ENCODE measurements at regions of chr18 and their contacts with region 1.

Region 1: DNA sequence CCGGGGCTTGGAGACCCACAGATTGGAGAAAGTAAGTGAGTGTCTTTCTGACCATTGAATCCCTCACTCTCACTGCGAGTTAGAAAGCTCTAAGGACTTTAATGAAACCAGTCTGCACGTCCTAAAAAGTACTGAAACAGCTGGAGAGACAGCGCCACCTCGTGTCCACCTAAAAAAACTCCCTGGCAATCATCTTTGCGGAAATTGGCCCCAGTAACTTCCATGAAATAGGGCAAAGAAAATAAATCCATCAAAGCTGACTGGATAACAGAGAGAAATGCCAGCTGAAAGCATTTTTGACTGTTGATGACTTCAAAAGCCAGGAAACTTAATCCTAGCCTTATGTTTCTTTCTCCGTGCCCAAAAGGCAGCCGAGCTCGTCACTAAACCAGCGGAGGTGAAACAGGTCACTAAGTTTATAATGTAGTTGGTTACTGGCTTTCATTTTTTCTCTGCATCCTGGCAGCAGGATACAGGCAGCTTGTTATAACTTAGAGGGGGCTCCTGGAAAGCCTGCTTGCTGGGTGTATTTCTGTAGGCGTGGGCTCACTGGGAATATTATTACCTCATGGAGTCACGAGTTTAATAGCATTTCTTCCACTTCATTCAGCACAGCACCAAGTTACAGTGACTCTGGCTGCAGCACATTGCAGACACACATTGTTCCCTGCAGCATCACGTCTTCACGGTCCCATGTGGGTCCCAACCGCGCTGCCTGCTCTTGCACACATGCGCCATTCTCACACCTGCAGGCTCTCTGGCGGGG is 266.5 kb downstream of the HRH4 start:
- DNase-seq: peak; percentile 77 to 89 (median 82)
- H3K4me3 ChIP-seq: no peak overlapping the region
- H3K27ac ChIP-seq: no peak overlapping the region
- H3K4me1 ChIP-seq: peaks cover 0 to 2% (median 0%) of the 10 kb centered on the region in 4 experiments
- H3K27me3 ChIP-seq: peaks cover 0 to 4% (median 0%) of the 10 kb centered on the region in 5 experiments

Region 2: GRCh38 chr18:24543805-24544498 is 183.0 kb before region 1 on chr18:
- CTCF ChIA-PET with region 1: interaction called, 28 read pairs
- POLR2A ChIA-PET with region 1: no interaction called
- DNase-seq: peak; percentile 22 to 52 (median 38)
- H3K4me3 ChIP-seq: no peak overlapping the region
- H3K27ac ChIP-seq: no peak overlapping the region
- H3K4me1 ChIP-seq: peaks cover 1 to 6% (median 3%) of the 10 kb centered on the region in 4 experiments
- H3K27me3 ChIP-seq: no peaks in the 10 kb centered on the region

Measured in common myeloid progenitor, CD34-positive (primary cell).